Mucosa of descending colon (tissue), 3 donors: ENCODE measurements at regions of chr12 and their contacts with region 1.

Region 1: GRCh38 chr12:66087365-66087943 is 43.1 kb downstream of the LLPH start:
- DNase-seq: peak in 2 of 3 donors; percentile 55 to 86
- ATAC-seq: peak; percentile 60
- H3K4me3 ChIP-seq: no peak overlapping the region
- H3K4me1 ChIP-seq: no peaks in the 10 kb centered on the region
- CTCF ChIP-seq: peak; percentile 36

Region 2: DNA sequence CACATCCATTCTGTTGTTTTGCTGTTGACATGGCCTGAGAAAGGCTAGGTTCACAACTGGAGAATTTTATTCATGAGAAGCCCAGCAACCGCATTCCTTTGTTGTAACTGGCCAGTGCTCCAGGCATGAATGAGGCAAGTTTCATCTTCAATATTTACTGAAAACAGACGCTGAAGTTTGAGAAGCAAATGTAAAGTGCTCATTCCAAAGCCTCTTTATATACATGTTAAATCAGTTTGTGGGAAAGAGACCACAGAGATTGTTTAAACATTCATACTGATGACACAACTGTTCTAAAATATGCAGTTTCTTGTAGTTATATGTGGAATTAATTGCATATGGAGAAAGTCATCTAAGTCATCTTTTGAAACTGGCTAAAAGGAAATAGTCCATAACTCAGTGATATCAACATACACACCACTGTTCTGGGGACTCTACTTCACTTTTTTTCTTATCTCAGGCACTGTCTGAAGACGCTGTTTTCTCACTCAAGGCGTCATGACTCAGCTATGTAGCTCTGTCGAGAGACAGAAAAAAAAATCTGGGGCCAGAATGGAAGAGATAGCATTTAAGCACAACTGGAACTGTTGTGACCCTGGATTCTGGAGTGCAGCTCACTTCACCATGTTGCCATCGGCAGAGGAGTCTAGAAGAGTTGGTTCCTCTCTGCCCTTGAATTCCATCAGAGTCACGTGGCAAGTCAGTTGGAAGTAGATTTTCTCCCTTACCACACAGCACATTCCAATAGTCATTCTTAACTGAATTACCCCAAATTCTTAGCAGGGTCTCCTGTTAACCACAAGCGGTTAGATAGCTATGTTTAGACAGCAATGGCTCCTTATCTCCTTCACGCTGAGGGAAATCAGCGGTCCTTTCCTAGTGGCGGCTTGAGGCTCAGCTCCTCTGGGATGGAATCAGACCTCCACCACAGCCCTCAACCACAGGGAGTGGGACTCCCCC is 521.6 kb before region 1 on chr12:
- intact Hi-C with region 1: loop called in 1 of 2 experiments (anchors 10 kb)
- DNase-seq: no peak
- ATAC-seq: no peak
- H3K4me3 ChIP-seq: no peak overlapping the region
- H3K4me1 ChIP-seq: no peaks in the 10 kb centered on the region
- CTCF ChIP-seq: no peak